Activated CD4-positive, alpha-beta T cell treated with anti-CD3 and anti-CD28 coated beads, Interleukin-2, amount 10 ng/mL, durations not matched to agents 7 days and 5 days (primary cell): ENCODE measurements at regions of chr15 and their contacts with region 1.

Region 1: GRCh38 chr15:67140078-67140833 is 74.9 kb downstream of the SMAD3 start:
- DNase-seq: no peak
- H3K4me3 Mint-ChIP-seq: no peak overlapping the region
- H3K27ac Mint-ChIP-seq: peak overlapping the region; percentile 60
- H3K4me1 Mint-ChIP-seq: peaks cover 95% of the 10 kb centered on the region
- H3K27me3 Mint-ChIP-seq: no peaks in the 10 kb centered on the region

Region 2: GRCh38 chr15:67127965-67128364 is 12.3 kb before region 1 on chr15:
- CTCF ChIA-PET with region 1: interaction called, 19 read pairs
- POLR2A ChIA-PET with region 1: interaction called, 6 read pairs
- DNase-seq: no peak
- H3K4me3 Mint-ChIP-seq: no peak overlapping the region
- H3K27ac Mint-ChIP-seq: peak overlapping the region; percentile 5
- H3K4me1 Mint-ChIP-seq: peaks cover 87% of the 10 kb centered on the region
- H3K27me3 Mint-ChIP-seq: no peaks in the 10 kb centered on the region

Region 3: DNA sequence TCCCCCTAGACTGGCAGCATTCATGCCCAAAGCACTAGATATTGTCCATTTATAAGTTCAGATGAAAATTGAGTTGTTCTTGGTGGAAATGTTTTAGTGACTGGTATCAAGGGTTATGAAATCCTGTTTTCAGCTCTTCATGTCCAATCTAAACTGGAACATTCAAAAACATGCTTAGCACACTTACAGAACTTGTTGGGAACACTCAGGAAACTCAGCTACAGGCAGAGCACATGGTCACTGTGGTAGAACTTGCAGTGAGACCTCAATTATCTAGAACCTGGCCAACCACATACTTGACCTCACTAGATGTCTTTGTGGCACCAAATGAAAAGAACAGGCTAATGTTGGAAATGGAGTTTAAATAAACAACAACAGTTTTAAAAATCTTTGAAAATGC is 14.0 kb after region 1 on chr15:
- CTCF ChIA-PET with region 1: no interaction called
- POLR2A ChIA-PET with region 1: no interaction called
- DNase-seq: no peak
- H3K4me3 Mint-ChIP-seq: no peak overlapping the region
- H3K27ac Mint-ChIP-seq: no peak overlapping the region
- H3K4me1 Mint-ChIP-seq: peaks cover 64% of the 10 kb centered on the region
- H3K27me3 Mint-ChIP-seq: no peaks in the 10 kb centered on the region

Region 4: GRCh38 chr15:67175643-67176071 is 35.4 kb after region 1 on chr15:
- CTCF ChIA-PET with region 1: no interaction called
- POLR2A ChIA-PET with region 1: no interaction called
- DNase-seq: no peak
- H3K4me3 Mint-ChIP-seq: no peak overlapping the region
- H3K27ac Mint-ChIP-seq: peak overlapping the region; percentile 48
- H3K4me1 Mint-ChIP-seq: peaks cover 54% of the 10 kb centered on the region
- H3K27me3 Mint-ChIP-seq: no peaks in the 10 kb centered on the region